MCF 10A (cell line): ENCODE measurements at regions of chr12 and their contacts with region 1.

Region 1: GRCh38 chr12:38906482-38907170 is 1.2 kb upstream of the CPNE8 start:
- DNase-seq: peak; percentile 88
- H3K4me3 Mint-ChIP-seq: peak overlapping the region; percentile 98
- H3K27ac Mint-ChIP-seq: peak overlapping the region; percentile 89
- H3K4me1 Mint-ChIP-seq: peaks cover 22% of the 10 kb centered on the region
- H3K27me3 Mint-ChIP-seq: no peaks in the 10 kb centered on the region
- CTCF ChIP-seq: peak; percentile 81

Region 2: DNA sequence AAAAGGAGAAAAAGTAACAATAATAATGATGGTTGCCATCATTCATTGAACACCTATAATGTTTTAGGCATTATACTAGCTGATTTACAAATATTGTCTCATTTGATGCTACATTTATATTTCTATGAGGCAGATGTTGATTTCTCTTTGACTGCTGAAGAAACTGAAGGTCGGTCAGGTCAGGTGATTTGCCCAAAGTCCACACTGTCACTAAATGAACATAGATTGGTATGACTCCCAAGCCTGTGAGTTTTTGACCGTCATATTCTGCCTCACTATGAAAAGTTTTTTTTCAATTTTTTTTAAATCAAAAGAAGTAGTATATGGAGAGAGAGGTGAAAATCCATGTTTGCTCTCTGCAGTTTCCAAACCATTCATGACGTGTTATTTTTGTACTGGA is 579.3 kb before region 1 on chr12:
- CTCF ChIA-PET with region 1: interaction called, 12 read pairs
- POLR2A ChIA-PET with region 1: interaction called, 10 read pairs
- intact Hi-C with region 1: loop called (anchors 2 kb)
- DNase-seq: no peak
- H3K4me3 Mint-ChIP-seq: no peak overlapping the region
- H3K27ac Mint-ChIP-seq: no peak overlapping the region
- H3K4me1 Mint-ChIP-seq: no peaks in the 10 kb centered on the region
- H3K27me3 Mint-ChIP-seq: no peaks in the 10 kb centered on the region
- CTCF ChIP-seq: no peak

Region 3: DNA sequence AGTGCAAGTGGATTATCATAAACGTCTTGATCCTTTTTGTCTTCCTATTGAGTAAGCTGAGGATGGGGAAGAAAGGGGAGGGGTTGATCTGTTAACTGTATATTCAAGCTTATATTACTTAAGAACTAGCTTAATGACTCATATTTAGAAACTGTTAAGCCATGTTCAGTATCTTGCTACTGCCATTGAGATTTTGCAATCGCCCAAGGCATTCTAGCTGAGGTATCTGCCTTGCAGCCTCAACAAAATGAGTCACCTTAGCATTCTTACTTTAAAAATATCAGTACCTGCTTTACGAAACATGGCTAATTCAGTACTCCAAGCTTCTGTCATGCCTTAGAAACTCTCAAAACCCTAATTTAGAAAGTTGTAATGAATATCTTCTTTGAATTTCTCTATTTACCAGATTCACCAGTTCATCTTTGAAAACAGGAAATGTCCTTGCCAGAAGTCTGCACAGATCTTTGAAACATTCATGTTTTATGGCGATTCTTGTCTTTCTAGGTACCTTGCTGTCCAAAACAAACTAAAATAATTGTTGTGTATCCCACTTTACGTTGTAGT is 514.0 kb before region 1 on chr12:
- CTCF ChIA-PET with region 1: no interaction called
- POLR2A ChIA-PET with region 1: interaction called, 4 read pairs
- intact Hi-C with region 1: loop called (anchors 5 kb)
- DNase-seq: peak; percentile 98
- H3K4me3 Mint-ChIP-seq: peak overlapping the region; percentile 33
- H3K27ac Mint-ChIP-seq: peak overlapping the region; percentile 46
- H3K4me1 Mint-ChIP-seq: peaks cover 22% of the 10 kb centered on the region
- H3K27me3 Mint-ChIP-seq: no peaks in the 10 kb centered on the region
- CTCF ChIP-seq: no peak

Region 4: GRCh38 chr12:38886064-38886463 is 20.6 kb before region 1 on chr12:
- CTCF ChIA-PET with region 1: interaction called, 9 read pairs
- POLR2A ChIA-PET with region 1: interaction called, 12 read pairs
- intact Hi-C with region 1: no loop called
- DNase-seq: peak; percentile 86
- H3K4me3 Mint-ChIP-seq: no peak overlapping the region
- H3K27ac Mint-ChIP-seq: peak overlapping the region; percentile 66
- H3K4me1 Mint-ChIP-seq: peaks cover 22% of the 10 kb centered on the region
- H3K27me3 Mint-ChIP-seq: no peaks in the 10 kb centered on the region
- CTCF ChIP-seq: no peak

Region 5: GRCh38 chr12:39064708-39065107 is 158.1 kb after region 1 on chr12:
- CTCF ChIA-PET with region 1: interaction called, 11 read pairs
- POLR2A ChIA-PET with region 1: interaction called, 10 read pairs
- intact Hi-C with region 1: no loop called
- DNase-seq: no peak
- H3K4me3 Mint-ChIP-seq: no peak overlapping the region
- H3K27ac Mint-ChIP-seq: no peak overlapping the region
- H3K4me1 Mint-ChIP-seq: peaks cover 10% of the 10 kb centered on the region
- H3K27me3 Mint-ChIP-seq: no peaks in the 10 kb centered on the region
- CTCF ChIP-seq: no peak

Region 6: DNA sequence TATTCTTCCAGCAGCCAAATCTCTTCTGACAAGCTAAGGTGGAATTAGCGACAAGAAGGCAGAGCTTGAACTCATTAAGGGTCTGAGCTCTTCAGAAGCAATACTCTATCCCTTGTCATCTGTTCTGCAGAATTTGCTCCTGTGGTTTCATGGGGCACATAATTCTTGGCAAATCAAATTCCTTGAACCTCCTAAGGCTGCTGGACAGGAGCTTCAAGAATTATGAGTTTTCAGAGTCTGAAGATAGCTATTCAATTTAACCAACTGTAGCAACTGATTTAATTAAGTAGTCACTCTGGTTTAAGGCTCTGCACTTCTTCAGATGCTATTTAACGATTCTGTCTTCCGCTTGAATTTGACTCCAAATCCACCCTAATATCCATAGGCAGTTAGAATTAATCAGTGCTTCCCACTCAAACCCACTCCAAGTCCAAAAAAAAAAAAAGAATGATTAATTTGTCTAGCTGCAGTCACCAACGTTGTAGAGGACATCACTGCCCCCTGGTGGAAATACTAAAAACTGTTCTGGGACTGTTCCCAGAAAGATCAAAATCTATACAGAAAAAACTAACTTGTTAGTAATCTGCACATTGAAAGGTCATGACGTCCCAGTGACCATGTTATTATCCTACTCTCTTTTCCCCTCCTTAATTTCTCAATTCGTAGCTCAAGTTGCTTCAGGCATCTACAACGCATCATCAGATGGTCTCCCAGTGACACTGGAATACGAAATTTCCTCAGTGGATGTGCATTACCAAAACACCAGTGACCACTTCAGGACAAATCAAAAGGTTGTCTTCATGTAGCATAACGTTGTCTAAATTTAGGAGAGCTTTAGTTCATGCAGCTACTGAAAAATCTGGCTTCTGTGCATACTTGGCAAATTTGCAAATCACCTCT is 366.5 kb after region 1 on chr12:
- CTCF ChIA-PET with region 1: interaction called, 60 read pairs
- POLR2A ChIA-PET with region 1: interaction called, 5 read pairs
- intact Hi-C with region 1: loop called (anchors 1 kb)
- DNase-seq: peak; percentile 67
- H3K4me3 Mint-ChIP-seq: no peak overlapping the region
- H3K27ac Mint-ChIP-seq: no peak overlapping the region
- H3K4me1 Mint-ChIP-seq: peaks cover 8% of the 10 kb centered on the region
- H3K27me3 Mint-ChIP-seq: no peaks in the 10 kb centered on the region
- CTCF ChIP-seq: peak; percentile 61